ENCODE measurements at regions of chr1 and their contacts with region 1.

Region 1: DNA sequence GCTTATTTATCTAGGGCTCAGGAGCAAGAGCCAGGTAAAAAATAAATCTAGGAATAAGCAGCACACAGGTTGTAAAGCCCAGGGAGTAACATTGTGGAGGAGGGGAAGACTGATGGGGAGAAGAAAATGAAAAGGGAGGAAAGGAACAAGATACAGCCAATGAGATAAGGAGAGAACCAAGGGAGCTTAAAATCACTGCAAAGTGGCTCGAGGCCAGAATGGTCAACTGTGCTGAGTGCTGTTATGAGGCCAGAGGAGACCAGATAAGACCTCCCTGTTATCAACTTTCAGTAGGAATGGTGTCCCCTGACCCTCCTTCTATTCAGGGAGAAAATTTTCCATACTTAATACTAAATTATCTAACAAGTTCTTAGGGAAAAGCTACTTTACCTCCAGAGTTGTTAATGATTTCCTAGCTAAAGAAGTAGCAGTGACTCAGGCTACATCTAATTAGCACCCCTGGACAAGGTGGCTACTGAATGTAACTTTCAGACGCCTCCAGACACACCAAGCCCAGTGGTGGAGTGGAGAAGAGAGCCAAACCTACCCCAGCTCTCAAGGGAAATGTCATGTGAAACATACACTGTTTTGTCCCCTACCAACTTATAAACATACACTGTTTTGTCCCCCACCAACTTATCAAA is 25.5 kb downstream of the ENAH start:
- DNase-seq: no peak
- H3K4me3 ChIP-seq: no peak overlapping the region
- H3K27ac ChIP-seq: no peak overlapping the region
- H3K4me1 ChIP-seq: no peaks in the 10 kb centered on the region
- H3K27me3 ChIP-seq: no peaks in the 10 kb centered on the region
- CTCF ChIP-seq: no peak

Region 2: DNA sequence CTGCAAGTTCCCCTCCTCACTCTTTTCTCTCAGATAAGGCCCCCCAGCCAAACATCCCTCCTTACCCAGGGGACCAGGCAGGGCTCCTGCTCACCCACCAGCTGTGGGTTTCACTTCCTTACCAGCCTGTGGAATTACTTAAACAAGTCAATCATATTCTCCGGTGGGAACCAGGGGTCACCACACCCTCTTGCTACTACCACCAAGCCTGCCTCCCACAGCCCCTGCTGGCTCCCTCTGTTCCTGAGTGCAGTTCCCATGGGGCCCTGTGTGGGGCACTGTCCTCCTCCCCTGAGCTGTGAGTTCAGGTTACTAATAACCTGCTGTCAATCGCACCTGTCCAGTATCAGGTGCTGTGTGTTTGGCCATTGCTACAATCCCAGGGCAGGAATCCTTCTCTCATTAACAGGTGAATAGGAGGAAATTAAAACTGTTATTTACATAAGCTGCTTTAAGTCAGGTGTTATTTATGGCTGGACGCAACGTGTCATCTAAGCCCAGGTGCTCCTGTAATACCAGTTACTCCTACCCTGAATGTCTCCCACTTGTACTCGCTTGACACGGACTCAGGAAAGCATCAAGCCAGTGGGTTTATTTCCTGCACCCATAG is 146.5 kb before region 1 on chr1:
- CTCF ChIA-PET with region 1: no interaction called
- POLR2A ChIA-PET with region 1: no interaction called
- intact Hi-C with region 1: no loop called
- DNase-seq: peak; percentile 59 to 81
- H3K4me3 ChIP-seq: no peak overlapping the region
- H3K27ac ChIP-seq: no peak overlapping the region
- H3K4me1 ChIP-seq: no peaks in the 10 kb centered on the region
- H3K27me3 ChIP-seq: no peaks in the 10 kb centered on the region
- CTCF ChIP-seq: peak; percentile 94

Region 3: DNA sequence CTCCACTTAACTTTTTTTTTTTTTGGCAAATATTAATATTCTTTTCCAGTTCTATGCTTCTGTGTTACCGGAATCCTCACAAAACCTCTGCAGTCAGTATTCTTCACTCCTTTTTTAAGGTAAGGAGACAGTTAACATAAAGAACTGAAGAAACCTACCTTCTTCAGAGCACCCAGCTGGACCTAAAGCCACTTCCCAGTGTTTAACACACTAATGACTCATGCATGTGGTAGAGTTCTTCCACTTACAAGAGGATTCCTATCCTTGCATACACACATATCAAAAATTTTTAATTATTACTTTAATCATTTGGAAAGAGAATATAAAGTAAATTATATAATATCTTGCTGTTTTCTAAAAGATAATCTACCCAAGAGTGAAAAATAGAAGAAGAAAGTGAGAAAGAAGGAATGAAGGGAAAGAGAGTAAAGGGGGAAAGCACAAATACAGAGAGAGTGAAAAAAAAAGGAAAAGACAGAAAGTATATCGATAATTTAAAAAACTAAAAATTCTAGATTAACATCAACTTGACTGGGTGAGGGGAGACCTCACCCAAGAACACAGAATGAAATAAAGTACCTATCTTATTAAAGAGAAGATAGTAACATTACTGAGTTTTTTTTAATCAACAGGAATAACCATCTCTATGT is 29.4 kb before region 1 on chr1:
- CTCF ChIA-PET with region 1: no interaction called
- POLR2A ChIA-PET with region 1: no interaction called
- intact Hi-C with region 1: no loop called
- DNase-seq: no peak
- H3K4me3 ChIP-seq: no peak overlapping the region
- H3K27ac ChIP-seq: peak overlapping the region; percentile 30; the same call in 1 of the 2 replicates
- H3K4me1 ChIP-seq: peaks cover 22% of the 10 kb centered on the region
- H3K27me3 ChIP-seq: no peaks in the 10 kb centered on the region
- CTCF ChIP-seq: no peak

Region 4: DNA sequence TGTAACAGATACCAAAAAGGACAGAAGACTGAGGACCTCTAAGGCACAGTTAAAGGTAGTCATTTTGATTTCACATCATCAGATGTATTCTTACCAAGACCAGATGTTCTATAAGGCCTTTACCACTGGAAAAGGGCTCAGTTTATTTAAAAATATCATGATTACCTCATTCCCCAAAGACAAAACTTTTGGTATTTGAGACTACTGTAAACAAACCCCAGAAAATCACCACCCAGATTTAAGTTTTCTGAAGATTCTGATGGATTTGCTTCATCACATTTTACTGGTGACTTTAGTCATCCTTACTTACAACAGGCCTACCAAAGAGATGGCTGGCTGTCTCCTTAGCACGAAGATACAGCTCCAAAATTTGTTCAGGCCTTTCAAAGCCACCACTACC is 17.2 kb after region 1 on chr1:
- CTCF ChIA-PET with region 1: no interaction called
- POLR2A ChIA-PET with region 1: no interaction called
- intact Hi-C with region 1: loop called (anchors 2 kb)
- DNase-seq: no peak
- H3K4me3 ChIP-seq: no peak overlapping the region
- H3K27ac ChIP-seq: no peak overlapping the region
- H3K4me1 ChIP-seq: peaks cover 10% of the 10 kb centered on the region
- H3K27me3 ChIP-seq: no peaks in the 10 kb centered on the region
- CTCF ChIP-seq: no peak

Region 5: GRCh38 chr1:225973158-225973557 is 345.7 kb after region 1 on chr1:
- CTCF ChIA-PET with region 1: no interaction called
- POLR2A ChIA-PET with region 1: no interaction called
- intact Hi-C with region 1: no loop called
- DNase-seq: peak; percentile 14 to 40
- H3K4me3 ChIP-seq: no peak overlapping the region
- H3K27ac ChIP-seq: no peak overlapping the region
- H3K4me1 ChIP-seq: no peaks in the 10 kb centered on the region
- H3K27me3 ChIP-seq: no peaks in the 10 kb centered on the region
- CTCF ChIP-seq: no peak